AG04449 (cell line): ENCODE measurements at regions of chr6 and their contacts with region 1.

Region 1: GRCh38 chr6:122530440-122531046 is 58.9 kb upstream of the SERINC1 start:
- DNase-seq: peak; percentile 31
- H3K4me3 ChIP-seq: no peak overlapping the region
- CTCF ChIP-seq: peak; percentile 75

Region 2: GRCh38 chr6:121510559-121511177 is 1019.9 kb before region 1 on chr6:
- CTCF ChIA-PET with region 1: no interaction called
- POLR2A ChIA-PET with region 1: no interaction called
- DNase-seq: no peak
- H3K4me3 ChIP-seq: no peak overlapping the region
- CTCF ChIP-seq: no peak

Region 3: GRCh38 chr6:122381497-122382265 is 148.9 kb before region 1 on chr6:
- CTCF ChIA-PET with region 1: interaction called, 102 read pairs
- POLR2A ChIA-PET with region 1: no interaction called
- DNase-seq: peak; percentile 31
- H3K4me3 ChIP-seq: no peak overlapping the region
- CTCF ChIP-seq: peak; percentile 80

Region 4: GRCh38 chr6:122471107-122472021 is 59.2 kb before region 1 on chr6 and contains the start of gene SERINC1:
- CTCF ChIA-PET with region 1: interaction called, 58 read pairs
- POLR2A ChIA-PET with region 1: no interaction called
- DNase-seq: peak; percentile 61
- H3K4me3 ChIP-seq: peak within 1 kb of the TSS; percentile 97
- CTCF ChIP-seq: no peak

Region 5: DNA sequence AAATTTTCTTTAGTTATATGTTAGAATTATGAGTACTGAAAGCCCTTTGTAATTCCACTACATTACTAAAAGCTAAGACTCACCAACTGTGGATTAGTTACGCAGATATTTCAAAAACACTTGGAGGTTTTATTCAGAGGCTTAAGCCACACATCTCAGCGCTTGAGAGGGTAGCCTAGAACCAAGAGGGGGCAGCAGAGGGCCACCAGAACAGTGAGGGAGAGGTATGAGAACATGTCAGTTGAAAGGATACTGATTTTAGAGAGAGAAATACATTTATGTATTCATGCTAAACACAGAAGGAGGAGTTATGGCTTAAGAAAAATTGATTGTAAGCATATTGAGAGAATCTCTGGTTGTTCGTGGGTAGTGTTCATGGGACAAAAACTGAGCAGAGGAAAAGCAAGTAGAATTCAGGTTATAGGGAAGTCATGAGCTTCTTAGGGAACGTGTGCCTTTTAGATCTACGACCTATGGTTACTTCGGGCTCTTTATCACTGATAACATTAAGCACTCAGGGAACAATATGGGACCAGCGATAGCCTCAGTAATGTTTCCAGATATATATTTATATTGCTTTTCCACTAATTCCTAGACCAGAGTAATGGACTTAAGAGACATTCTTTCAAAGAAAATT is 38.5 kb before region 1 on chr6:
- CTCF ChIA-PET with region 1: interaction called, 139 read pairs
- POLR2A ChIA-PET with region 1: no interaction called
- DNase-seq: peak; percentile 19
- H3K4me3 ChIP-seq: no peak overlapping the region
- CTCF ChIP-seq: peak; percentile 87

Region 6: DNA sequence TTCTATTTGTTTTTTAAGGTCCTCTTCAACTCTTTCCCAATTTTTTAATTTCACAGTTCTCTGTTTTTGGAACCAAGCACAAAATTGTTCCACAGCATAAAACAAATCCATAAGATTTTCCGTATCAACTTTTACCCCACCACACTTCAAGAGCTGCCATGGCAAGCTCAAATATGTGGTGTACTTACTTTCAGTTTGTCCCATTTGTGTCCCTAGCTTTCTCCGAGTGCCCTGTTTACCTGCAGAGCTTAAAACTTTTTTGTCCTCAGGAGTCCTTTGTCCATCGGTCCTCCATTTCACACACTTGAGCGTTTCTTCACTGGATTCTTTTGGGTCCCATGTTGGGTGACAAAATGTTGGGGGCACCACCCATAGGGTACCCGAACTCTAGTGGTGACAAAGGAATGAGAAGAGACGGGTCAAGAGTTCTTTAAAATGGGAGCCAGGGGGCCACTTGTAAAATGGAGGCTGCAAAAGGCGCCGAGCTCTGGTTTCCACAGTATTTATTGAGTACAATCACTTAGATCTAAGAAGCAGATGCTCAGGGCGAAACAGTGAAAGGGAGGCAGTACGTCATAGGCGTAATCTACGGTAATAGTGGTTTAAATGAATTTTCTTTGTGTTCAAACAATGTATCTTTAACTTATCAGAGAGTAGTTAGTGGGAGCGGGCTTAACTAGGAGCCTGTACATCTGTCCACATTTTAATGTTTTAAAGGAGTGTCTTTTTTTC is 19.2 kb before region 1 on chr6:
- CTCF ChIA-PET with region 1: interaction called, 12 read pairs
- POLR2A ChIA-PET with region 1: no interaction called
- DNase-seq: no peak
- H3K4me3 ChIP-seq: no peak overlapping the region
- CTCF ChIP-seq: no peak

Region 7: DNA sequence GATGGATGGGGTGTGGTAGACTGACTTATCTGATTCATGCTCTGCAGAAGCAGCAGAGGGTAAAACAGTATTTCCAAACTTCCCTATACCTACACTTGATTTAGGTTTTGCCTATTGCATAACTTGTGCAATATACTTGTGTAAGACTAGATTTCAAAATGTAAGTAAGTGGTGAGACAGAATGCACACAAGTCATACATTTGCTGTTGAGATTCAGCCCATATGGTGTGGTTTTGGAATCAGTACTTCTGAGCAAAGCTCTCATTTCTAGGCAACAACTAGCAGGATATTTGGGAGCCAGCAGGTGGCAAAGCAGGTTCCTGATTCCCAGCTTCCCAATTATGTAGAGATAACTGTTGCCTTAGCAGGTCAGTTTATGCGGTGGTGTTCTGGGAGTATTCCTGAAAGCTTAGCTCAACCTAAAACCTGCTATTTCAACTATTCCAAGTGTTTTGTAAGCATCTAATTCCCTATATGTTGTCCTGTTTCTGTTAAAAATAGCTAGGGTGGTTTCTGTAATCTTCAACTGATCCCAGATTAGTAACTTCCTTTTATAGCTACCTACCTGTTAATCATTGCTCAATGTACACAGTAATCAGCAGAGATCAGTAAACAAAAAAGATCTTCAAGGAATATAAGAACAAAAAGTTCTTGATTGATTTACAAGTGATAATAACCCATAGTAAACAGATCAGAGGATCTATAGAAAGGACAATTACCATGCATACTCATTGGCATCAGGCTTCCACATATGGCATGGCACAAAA is 240.5 kb after region 1 on chr6:
- CTCF ChIA-PET with region 1: no interaction called
- POLR2A ChIA-PET with region 1: no interaction called
- DNase-seq: no peak
- H3K4me3 ChIP-seq: no peak overlapping the region
- CTCF ChIP-seq: no peak